Aorta (tissue), 5 donors: ENCODE measurements at regions of chr20 and their contacts with region 1.

Region 1: GRCh38 chr20:32357869-32358631 is at the start of gene ASXL1:
- DNase-seq: peak; percentile 99
- ATAC-seq: peak; percentile 99
- H3K4me3 ChIP-seq: peak within 1 kb of the TSS; percentile 86 to 89
- H3K27ac ChIP-seq: peak within 1 kb of the TSS; percentile 97 to 98
- H3K4me1 ChIP-seq: no peaks in the 10 kb centered on the region
- H3K27me3 ChIP-seq: no peaks in the 10 kb centered on the region
- total RNA-seq, gene ASXL1: 92.5 to 102 TPM

Region 2: GRCh38 chr20:32207626-32208498 is 150.2 kb before region 1 on chr20 and contains the starts of genes PLAGL2 and POFUT1:
- intact Hi-C with region 1: loop called in 1 of 2 experiments (anchors 10 kb)
- DNase-seq: peak; percentile 94 to 97
- ATAC-seq: peak; percentile 96
- H3K4me3 ChIP-seq: peak within 1 kb of the TSS; percentile 88 to 95
- H3K27ac ChIP-seq: peak within 1 kb of the TSS in 1 of 2 donors; percentile 26
- H3K4me1 ChIP-seq: peaks cover 0 to 3% of the 10 kb centered on the region in 2 donors
- H3K27me3 ChIP-seq: no peaks in the 10 kb centered on the region
- total RNA-seq, gene PLAGL2: 8.2 to 9.8 TPM
- total RNA-seq, gene POFUT1: 29.8 to 35.2 TPM

Region 3: DNA sequence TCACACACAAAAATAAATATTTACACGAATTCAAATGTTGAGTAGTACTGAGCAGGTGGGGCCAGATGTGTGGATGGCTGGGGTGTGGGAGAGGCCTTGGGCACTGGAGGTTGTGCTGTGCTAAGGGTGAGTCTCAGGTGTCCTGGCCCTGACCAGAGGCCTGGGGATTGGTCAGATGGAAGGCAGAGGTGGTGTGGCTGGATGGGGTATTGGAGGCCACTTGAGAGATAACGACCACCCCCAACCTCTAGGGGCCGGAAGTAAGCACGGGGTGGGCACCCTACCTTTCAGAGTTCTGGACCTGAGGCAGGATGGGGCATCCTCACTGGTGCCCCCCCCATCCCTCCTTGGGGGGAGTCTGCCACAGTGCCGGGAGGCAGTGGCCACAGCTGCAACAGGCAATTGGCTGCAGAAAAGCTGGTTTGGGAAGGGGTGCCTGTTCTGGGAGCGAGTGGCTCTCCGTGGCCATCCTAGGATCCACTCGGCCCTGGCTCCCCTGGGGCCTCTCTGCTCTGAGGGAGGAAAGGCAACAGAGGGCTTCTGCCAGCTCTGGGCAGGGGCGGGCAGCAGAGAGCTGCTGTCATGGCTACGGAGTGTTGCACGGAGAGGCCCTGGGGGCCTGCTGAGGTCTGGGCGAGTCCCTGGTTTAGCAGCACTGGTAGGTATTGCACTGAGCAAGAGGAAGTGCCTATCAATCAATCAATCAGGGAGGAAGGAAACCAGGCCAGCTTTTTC is 87.7 kb after region 1 on chr20:
- intact Hi-C with region 1: loop called in 1 of 2 experiments (anchors 10 kb)
- DNase-seq: peak in 1 of 2 donors; percentile 63
- ATAC-seq: no peak
- H3K4me3 ChIP-seq: no peak overlapping the region
- H3K27ac ChIP-seq: no peak overlapping the region
- H3K4me1 ChIP-seq: no peaks in the 10 kb centered on the region
- H3K27me3 ChIP-seq: no peaks in the 10 kb centered on the region